Right ventricle myocardium inferior (tissue), 1 donor: ENCODE measurements at regions of chr1 and their contacts with region 1.

Region 1: DNA sequence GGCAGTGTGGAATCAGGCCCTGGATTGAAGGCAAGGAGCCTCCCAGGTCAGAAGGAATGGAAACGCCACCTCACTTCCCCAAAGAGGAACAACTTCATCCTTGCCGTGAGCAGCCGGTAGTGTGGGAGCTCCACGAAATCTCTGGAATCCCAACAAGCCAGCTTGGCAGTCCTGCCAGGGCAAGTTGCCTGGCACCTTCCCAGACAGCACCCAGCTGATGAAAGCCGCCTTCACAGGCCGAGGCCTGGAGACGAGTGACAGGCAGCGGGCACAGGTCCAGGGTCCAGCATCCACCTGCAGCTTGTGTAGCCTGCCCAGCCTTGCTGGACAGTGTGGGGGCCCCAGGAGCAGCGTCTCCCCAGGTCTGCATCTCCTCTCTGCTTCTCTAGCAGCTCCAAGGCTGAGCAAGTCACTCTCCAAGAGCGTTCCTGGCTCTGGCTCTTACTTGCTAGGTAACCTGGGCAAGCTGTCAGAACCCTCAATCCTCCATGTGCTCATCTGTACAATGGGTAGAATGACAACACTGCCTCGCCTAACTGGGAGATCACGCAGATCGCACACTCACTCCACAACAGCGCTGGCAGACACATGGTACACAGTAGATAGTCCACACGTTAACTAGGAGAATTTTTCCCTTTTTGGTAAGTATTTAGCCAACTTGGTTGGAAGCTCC is 43.0 kb downstream of the ACOT7 start:
- DNase-seq: peak; percentile 85
- ATAC-seq: peak; percentile 47

Region 2: DNA sequence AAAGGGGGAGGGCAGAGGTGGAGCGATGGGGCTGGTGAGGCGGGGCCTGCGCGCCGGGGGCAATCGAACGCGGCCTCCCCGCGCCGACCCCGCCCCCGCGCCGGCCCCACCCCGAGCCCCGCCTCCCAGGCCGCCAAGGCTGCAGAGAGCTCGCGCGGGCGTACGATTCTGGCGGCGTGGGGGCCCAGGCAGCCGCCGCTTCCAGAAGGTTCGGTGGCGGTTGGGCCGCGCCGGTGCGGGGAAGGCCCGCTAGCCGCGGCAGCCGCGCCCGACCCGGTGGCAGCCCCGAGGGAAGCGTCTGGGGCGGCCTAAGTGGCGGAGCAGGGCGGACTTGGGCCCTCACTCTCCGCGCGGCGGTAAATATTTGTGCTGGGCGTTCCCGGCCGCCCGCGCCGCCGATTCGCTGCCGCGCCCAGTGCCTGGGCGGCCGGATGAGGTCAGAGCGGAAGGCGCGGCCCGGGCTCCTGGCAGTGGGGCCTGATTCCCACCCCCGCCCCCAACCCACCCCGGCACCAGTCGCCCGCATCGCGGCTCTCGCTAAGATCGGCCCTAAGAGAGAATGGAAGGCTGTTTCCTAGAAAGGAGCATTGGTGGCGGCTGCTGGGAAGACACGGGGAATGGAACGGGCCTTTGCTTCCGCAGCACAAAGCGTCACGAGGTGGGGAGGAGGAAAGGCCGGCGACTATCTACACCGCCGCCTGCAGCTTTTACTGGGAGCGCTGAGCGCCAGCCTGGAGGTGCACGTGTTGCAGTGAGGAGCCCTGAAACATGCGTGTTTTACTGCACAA is 43.0 kb after region 1 on chr1 and contains the start of gene ACOT7:
- intact Hi-C with region 1: loop called (anchors 5 kb)
- DNase-seq: peak; percentile 94
- ATAC-seq: peak; percentile 98
- total RNA-seq, gene ACOT7: 9.8 TPM